Dorsolateral prefrontal cortex (tissue), 120 donors: ENCODE measurements at regions of chr12 and their contacts with region 1.

Region 1: DNA sequence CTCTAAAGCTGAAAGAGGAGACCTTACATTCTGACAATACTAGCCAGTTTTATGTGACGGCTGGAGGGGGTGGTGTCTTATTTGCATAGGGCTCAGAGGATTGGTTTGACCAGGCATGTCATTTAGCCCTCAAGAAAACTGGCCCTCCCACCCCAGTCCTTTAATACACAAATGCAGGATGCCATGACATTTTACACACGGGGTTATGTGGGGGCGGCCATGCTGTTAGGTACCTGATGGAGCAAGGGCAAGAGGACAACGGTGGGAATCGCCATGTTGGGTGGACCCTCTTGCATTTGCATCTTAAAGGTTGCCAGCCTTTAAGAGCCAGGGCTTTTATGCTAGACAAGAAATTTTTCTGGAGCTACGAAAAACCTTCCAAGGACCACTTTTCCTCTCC is 23.3 kb downstream of the MDM2 start:
- DNase-seq: no peak
- H3K4me3 ChIP-seq: no peak overlapping the region
- H3K27ac ChIP-seq: peak overlapping the region in 4 of 59 donors; percentile 5 to 20 (median 12)
- H3K27me3 ChIP-seq: no peaks in the 10 kb centered on the region
- CTCF ChIP-seq: no peak

Region 2: GRCh38 chr12:68733661-68734071 is 97.6 kb before region 1 on chr12:
- intact Hi-C with region 1: no loop called
- DNase-seq: no peak
- H3K4me3 ChIP-seq: no peak overlapping the region
- H3K27ac ChIP-seq: no peak overlapping the region
- H3K27me3 ChIP-seq: no peaks in the 10 kb centered on the region
- CTCF ChIP-seq: no peak

Region 3: GRCh38 chr12:68880660-68881325 is 49.5 kb after region 1 on chr12:
- intact Hi-C with region 1: no loop called
- DNase-seq: no peak
- H3K4me3 ChIP-seq: no peak overlapping the region
- H3K27ac ChIP-seq: peak overlapping the region in 56 of 59 donors; percentile 2 to 87 (median 74)
- H3K27me3 ChIP-seq: no peaks in the 10 kb centered on the region
- CTCF ChIP-seq: no peak

Region 4: GRCh38 chr12:69070319-69071090 is 239.2 kb after region 1 on chr12:
- intact Hi-C with region 1: loop called (anchors 10 kb)
- DNase-seq: peak in 8 of 10 donors; percentile 22 to 80 (median 64)
- H3K4me3 ChIP-seq: peak overlapping the region in 2 of 59 donors; percentile 15 to 36
- H3K27ac ChIP-seq: peak overlapping the region in 3 of 59 donors; percentile 9 to 47 (median 16)
- H3K27me3 ChIP-seq: peaks cover 0 to 3% (median 0%) of the 10 kb centered on the region in 45 donors
- CTCF ChIP-seq: peak; percentile 62 to 96 (median 90)